ENCODE measurements at regions of chr15 and their contacts with region 1.

Region 1: GRCh38 chr15:37098468-37099318 is 1.7 kb downstream of the MEIS2 start:
- DNase-seq: no peak
- H3K4me3 ChIP-seq: peak overlapping the region; percentile 74 to 80
- H3K27ac ChIP-seq: peak overlapping the region; percentile 95
- H3K4me1 ChIP-seq: peaks cover 19% of the 10 kb centered on the region
- H3K27me3 ChIP-seq: no peaks in the 10 kb centered on the region
- CTCF ChIP-seq: no peak
- POLR2A ChIP-seq: no peak

Region 2: DNA sequence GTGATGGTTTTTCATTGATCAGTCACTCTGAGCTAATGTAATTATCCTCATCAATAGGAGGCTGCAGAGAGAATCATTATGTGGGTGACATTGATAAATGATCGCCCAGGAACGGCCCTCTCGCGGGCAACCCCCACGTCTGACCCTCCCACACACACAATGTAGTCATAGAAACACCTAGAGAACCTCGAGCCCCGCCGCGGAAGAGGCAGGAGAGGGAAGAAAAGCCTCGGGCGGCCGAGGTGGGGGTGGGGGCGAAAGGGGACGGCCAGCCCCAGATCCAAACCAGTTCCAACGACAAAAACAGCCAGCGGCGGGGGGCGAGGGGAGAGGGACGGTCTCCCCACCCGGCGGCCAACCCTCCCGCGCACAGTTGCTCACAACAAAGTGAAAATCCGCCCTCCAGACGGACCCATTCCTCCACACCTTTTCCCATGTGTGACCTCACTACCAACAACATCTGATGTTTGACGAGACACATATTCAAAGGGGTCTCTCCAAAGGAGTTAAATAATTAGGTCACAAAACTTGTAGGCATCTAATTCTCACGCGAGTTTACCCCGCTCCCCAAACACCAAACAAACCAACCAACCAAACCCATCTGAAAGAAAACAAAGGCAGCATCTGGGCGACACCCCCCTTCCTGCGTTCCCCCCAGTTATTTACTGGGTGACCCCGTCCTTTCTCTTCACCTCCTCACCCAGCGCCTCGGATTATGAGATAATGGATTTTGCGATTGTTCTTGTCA is 211.3 kb before region 1 on chr15:
- intact Hi-C with region 1: loop called (anchors 5 kb)
- DNase-seq: no peak
- H3K4me3 ChIP-seq: peak overlapping the region; percentile 33 to 37
- H3K27ac ChIP-seq: no peak overlapping the region
- H3K4me1 ChIP-seq: peaks cover 38% of the 10 kb centered on the region
- H3K27me3 ChIP-seq: peaks cover 4% of the 10 kb centered on the region
- CTCF ChIP-seq: no peak
- POLR2A ChIP-seq: no peak

Region 3: DNA sequence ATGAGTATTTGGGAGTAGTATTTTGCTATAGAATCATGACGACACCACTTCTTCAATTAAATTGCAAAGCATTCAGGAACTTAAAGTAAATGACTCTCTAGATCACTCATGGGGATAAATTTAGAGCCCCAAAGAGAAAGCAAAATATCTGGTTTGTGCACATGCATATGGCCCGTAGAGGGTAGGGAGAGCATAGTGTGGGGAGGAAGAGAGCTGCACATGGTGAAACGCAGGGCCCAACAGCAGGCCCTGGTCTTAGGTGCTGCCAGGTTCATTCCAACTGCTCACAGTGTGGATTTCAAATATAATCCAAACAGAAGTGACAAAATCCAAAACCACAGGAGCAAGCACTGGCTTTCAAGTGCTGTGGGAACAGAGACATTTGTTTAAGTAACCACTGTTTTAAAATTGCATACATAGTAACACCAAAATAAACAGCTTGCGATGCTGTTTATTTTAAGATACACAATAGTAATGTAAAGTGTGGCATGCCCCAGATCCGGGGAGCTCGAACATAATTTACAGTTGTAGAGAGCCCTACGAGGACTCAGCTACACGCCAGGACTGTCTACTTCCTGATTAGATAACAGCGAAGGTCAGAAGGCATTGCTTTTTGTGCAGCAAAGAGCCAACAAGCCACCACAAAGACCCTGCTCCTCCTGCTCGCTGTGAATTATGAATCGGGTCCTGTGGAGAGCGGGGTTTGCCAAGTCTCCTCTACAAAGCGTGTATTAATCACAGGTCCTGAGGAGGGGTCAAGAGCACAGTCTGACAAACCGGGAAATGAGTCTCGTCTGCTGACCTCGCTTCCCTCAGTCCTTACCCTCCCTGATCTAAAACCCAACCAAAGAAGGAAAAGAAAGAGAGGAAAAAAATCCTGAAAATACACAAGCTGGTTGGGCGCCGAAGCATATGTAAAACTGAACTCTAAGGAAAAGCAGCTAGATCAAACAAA is 78.9 kb before region 1 on chr15:
- intact Hi-C with region 1: loop called (anchors 5 kb)
- DNase-seq: no peak
- H3K4me3 ChIP-seq: no peak overlapping the region
- H3K27ac ChIP-seq: no peak overlapping the region
- H3K4me1 ChIP-seq: peaks cover 34% of the 10 kb centered on the region
- H3K27me3 ChIP-seq: no peaks in the 10 kb centered on the region
- CTCF ChIP-seq: no peak
- POLR2A ChIP-seq: no peak